HEK293 (cell line): ENCODE measurements at regions of chr1 and their contacts with region 1.

Region 1: DNA sequence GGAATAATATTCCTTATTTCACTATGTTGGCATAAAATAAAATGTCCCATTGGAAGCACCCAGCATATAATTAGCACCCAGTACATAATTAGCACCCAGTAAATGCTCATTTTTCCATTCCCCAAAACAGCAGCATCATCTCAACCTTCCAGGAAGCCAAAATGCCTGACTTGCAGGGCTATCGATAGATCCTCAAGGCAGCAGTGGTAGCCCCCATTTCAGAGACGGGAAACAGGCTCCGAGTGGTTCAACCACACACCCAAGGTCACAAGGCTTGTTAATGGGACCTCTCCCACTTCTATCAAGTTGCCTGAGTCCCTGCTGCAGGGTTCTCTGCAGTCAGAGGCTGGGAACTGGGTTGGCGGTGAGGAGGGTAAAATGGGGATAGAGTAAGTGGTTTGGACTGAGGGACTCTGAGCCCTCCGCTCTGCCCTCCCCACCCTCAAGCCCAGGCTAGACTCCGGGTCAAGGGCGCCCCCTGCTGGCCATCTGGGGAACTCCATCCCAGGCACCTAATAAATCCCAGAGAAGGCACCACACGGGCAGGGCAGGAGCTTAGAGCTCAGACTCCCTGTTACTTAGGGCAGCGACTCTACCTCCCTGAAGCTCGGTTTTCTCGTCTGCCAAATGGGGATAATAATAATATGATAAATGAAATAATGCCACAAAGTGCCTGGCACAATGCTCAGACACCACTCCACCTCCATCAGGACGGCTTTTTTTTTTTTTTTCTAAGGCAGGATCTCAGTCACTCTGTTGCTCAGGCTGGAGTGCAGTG is 21.9 kb upstream of the LAPTM5 start:
- H3K4me3 ChIP-seq: no peak overlapping the region
- H3K27ac ChIP-seq: no peak overlapping the region
- H3K4me1 ChIP-seq: no peaks in the 10 kb centered on the region
- CTCF ChIP-seq: peak; percentile 88

Region 2: GRCh38 chr1:30718636-30719405 is 60.7 kb before region 1 on chr1:
- CTCF ChIA-PET with region 1: interaction called, 374 read pairs
- POLR2A ChIA-PET with region 1: interaction called, 24 read pairs
- H3K4me3 ChIP-seq: peak overlapping the region; percentile 57
- H3K27ac ChIP-seq: peak overlapping the region; percentile 37; the same call in 1 of the 2 replicates
- H3K4me1 ChIP-seq: no peaks in the 10 kb centered on the region
- CTCF ChIP-seq: peak; percentile 96

Region 3: DNA sequence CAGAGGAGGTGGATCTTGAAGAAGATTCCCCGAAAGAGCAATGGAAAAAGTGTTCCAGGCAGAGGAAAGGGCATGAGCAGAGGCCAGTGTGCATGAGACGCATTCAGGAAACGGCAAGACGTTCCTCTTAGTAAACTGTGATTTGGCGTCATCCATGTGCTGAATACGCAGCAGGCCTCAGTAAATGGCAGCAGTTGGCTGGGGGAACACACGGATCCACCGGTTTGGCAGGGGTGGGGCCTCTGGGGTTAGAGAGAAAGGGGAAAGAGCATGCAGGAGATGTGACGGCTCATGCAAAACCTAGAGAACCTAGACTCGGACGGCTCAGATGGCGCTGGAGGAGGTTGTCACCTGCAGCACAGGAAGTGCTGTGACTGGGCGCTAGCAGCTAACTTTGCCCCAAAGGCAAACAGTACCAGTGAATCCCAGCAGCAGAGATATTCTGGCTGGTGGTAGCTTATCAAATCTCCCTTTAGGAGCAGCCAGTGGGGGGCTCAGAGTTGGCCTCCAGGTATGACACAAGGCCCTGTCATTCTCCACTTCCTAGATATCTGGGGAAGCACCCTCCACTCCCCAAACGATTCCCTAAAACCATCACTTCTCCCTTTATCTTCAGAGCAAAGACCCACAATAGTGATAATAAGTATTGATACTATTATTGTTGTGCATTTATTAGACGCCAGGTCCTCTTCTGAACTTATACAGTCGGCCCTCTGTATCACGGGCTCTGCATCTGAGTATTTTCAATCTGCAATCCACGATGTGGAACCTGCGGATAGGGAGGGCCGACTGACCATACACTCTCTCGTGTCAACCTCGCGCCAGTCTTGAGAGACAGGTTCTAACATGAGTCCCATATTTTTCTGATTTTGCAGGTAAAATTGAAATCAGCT is 29.5 kb before region 1 on chr1:
- CTCF ChIA-PET with region 1: interaction called, 10 read pairs
- POLR2A ChIA-PET with region 1: no interaction called
- H3K4me3 ChIP-seq: no peak overlapping the region
- H3K27ac ChIP-seq: no peak overlapping the region
- H3K4me1 ChIP-seq: no peaks in the 10 kb centered on the region
- CTCF ChIP-seq: no peak

Region 4: DNA sequence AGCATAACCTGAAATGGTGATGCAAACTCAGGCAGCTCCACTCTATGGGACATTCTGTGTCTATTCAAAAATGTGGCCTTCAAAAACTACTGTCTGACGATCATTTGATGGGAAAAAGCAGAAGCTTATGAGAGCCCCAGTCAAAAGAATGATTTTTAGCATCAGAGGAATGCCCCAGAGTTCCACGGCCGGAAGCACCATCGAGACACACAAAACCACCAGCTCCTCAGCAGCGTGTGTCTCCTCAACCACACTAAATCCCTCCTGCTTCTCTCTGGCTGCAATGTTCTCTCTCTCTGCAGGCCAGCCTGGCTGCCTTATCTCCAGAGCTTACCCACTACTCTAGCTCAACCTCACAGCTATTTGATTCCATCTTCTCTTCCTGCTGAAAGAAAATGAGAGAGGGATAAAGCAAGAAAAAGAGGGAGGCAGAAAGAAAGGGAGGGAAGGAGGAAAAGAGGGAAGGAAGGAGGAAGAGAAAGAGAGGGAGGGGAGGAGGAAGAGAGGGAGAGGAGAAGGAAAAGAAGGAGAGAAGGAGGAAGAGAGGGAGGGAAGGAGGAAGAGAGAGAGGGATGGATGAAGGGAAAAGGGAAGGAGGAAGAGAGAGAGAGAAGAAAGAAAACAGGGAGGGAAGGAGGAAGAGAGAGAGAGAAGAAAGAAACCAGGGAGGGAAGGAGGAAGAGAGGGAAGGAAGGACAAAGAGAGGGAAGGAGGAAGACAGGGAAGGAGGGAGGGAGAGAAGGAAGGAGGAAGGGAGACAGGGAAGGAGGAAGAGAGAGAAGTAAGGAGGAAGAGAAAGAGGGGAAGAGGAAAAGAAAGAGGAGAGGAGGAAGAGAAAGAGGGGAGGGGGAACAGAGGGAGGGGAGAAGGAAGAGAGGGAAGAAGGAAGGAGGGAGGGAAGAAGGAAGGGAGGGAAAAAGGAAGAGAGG is 11.6 kb after region 1 on chr1:
- CTCF ChIA-PET with region 1: interaction called, 39 read pairs
- POLR2A ChIA-PET with region 1: no interaction called
- H3K4me3 ChIP-seq: no peak overlapping the region
- H3K27ac ChIP-seq: no peak overlapping the region
- H3K4me1 ChIP-seq: no peaks in the 10 kb centered on the region
- CTCF ChIP-seq: no peak

Region 5: GRCh38 chr1:30911046-30911954 is 131.8 kb after region 1 on chr1:
- CTCF ChIA-PET with region 1: interaction called, 231 read pairs
- POLR2A ChIA-PET with region 1: interaction called, 4 read pairs
- H3K4me3 ChIP-seq: no peak overlapping the region
- H3K27ac ChIP-seq: no peak overlapping the region
- H3K4me1 ChIP-seq: peaks cover 8% of the 10 kb centered on the region; the same call in 1 of the 2 replicates
- CTCF ChIP-seq: peak; percentile 93

Region 6: GRCh38 chr1:30929135-30929889 is 149.8 kb after region 1 on chr1:
- CTCF ChIA-PET with region 1: interaction called, 30 read pairs
- POLR2A ChIA-PET with region 1: interaction called, 3 read pairs
- H3K4me3 ChIP-seq: no peak overlapping the region
- H3K27ac ChIP-seq: no peak overlapping the region
- H3K4me1 ChIP-seq: no peaks in the 10 kb centered on the region
- CTCF ChIP-seq: peak; percentile 79; the same call in 1 of the 2 replicates